Sigmoid colon (tissue), 7 donors: ENCODE measurements at regions of chr20 and their contacts with region 1.

Region 1: GRCh38 chr20:15265581-15266309 is 928.3 kb upstream of the FLRT3 start:
- DNase-seq: no peak
- H3K4me3 ChIP-seq: no peak overlapping the region
- H3K27ac ChIP-seq: no peak overlapping the region
- H3K4me1 ChIP-seq: no peaks in the 10 kb centered on the region
- H3K27me3 ChIP-seq: no peaks in the 10 kb centered on the region
- CTCF ChIP-seq: no peak
- EP300 ChIP-seq: no peak
- POLR2A ChIP-seq: no peak

Region 2: DNA sequence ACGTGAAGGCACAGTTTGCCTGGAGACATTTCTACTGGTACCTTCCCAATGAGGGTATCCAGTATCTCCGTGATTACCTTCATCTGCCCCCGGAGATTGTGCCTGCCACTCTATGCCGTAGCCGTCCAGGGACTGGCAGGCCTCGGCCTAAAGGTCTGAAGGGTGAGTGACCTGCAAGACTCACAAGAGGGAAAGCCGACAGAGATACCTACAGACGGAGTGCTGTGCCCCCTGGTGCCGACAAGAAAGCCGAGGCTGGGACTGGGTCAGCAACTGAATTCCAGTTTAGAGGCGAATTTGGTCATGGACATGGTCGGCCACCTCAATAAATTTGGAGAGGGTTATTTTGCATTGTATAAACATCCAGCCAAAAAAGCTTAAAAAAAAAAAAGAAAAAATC is 508.0 kb before region 1 on chr20:
- intact Hi-C with region 1: loop called (anchors 10 kb)
- DNase-seq: no peak
- H3K4me3 ChIP-seq: no peak overlapping the region
- H3K27ac ChIP-seq: no peak overlapping the region
- H3K4me1 ChIP-seq: no peaks in the 10 kb centered on the region
- H3K27me3 ChIP-seq: no peaks in the 10 kb centered on the region
- CTCF ChIP-seq: no peak
- EP300 ChIP-seq: no peak
- POLR2A ChIP-seq: no peak